ENCODE measurements at regions of chr17 and their contacts with region 1.

Region 1: GRCh38 chr17:44533533-44534246 is 23.6 kb upstream of the FZD2 start:
- DNase-seq: peak; percentile 91

Region 2: DNA sequence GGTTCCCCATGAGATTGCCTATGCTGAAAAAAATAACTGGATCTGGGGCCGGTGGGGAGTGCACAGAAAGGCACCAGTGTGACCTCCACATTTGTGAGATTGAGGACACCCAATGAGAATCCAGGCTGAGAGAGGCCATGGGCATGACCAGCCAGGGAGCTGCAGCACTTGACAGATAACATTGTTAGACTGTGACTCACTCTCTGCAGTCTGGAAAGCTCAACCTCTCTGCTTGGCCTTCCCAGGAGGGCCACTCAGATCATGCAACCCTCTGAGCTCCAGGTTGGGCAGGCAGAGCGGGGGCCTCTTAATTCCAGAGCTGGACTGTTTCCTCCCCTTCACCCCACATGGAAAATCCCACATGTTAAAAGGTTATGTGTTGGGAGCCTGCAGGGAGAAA is 53.6 kb after region 1 on chr17:
- intact Hi-C with region 1: no loop called
- DNase-seq: peak; percentile 80

Region 3: GRCh38 chr17:44633998-44634397 is 100.3 kb after region 1 on chr17:
- intact Hi-C with region 1: loop called (anchors 2 kb)
- DNase-seq: no peak

Region 4: GRCh38 chr17:44672479-44673093 is 138.9 kb after region 1 on chr17:
- intact Hi-C with region 1: loop called (anchors 10 kb)
- DNase-seq: no peak